Ascending aorta (tissue), 2 donors: ENCODE measurements at regions of chr5 and their contacts with region 1.

Region 1: GRCh38 chr5:15794052-15794985 is 294.3 kb downstream of the FBXL7 start:
- DNase-seq: no peak
- H3K4me3 ChIP-seq: no peak overlapping the region
- H3K27ac ChIP-seq: no peak overlapping the region
- H3K4me1 ChIP-seq: peaks cover 0 to 12% of the 10 kb centered on the region in 2 donors
- H3K27me3 ChIP-seq: no peaks in the 10 kb centered on the region
- CTCF ChIP-seq: peak in 2 of 3 experiments; percentile 22 to 27

Region 2: GRCh38 chr5:15105796-15106393 is 688.4 kb before region 1 on chr5:
- intact Hi-C with region 1: loop called (anchors 2 kb)
- DNase-seq: peak in 1 of 2 donors; percentile 75
- H3K4me3 ChIP-seq: no peak overlapping the region
- H3K27ac ChIP-seq: no peak overlapping the region
- H3K4me1 ChIP-seq: no peaks in the 10 kb centered on the region
- H3K27me3 ChIP-seq: no peaks in the 10 kb centered on the region
- CTCF ChIP-seq: peak; percentile 47 to 78 (median 64)

Region 3: DNA sequence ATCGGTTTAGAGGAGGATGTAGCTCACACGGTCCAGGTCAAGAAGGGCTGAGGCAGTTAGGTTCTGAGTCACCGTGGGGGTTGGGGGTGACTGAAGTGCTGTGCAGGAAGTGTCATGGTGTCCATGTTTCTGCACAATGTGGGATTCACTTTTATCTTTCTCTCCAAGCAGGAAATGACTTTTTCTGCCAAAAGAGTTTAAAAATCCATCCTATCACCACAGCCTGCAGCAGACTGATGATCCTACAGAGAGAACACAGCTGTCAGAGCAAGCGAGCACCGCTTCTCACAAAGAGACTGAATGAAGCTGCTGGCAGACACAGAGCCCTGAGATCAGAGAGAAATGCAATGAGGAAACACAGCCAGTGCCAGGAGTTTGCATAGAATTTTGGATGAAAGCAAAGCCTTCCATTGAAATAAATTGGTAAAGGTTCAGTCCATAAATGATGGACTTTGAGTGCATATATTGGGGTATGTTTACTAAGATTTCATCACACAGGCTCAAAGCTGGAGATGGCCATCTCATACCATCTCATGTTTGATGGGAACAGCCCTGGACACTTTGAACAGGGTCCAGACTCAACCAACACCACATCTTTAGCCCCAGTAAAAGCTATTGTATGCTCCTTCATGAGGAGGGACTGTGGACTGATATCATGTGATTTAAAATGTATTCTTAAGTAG is 508.3 kb before region 1 on chr5:
- intact Hi-C with region 1: loop called (anchors 5 kb)
- DNase-seq: no peak
- H3K4me3 ChIP-seq: no peak overlapping the region
- H3K27ac ChIP-seq: no peak overlapping the region
- H3K4me1 ChIP-seq: no peaks in the 10 kb centered on the region
- H3K27me3 ChIP-seq: no peaks in the 10 kb centered on the region
- CTCF ChIP-seq: no peak

Region 4: DNA sequence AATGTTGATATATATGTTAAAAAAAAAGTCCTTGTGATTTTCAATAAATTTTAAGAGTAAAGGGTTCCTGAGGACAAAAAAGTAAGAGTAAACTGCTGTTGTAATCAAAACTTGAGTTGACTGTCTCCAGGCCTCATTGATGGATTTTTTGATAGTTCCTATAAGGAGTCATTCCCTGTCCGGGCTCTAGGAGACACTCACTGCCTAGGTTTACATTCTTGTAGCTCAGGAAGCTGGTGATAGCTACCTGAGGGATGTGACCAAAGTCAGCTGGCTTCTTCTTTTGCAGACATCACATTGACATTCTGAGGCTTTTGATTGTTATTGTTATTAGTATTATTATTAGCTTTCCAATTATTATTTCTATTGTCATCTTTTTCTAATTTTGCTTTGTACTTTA is 410.9 kb before region 1 on chr5:
- intact Hi-C with region 1: loop called (anchors 10 kb)
- DNase-seq: no peak
- H3K4me3 ChIP-seq: no peak overlapping the region
- H3K27ac ChIP-seq: no peak overlapping the region
- H3K4me1 ChIP-seq: no peaks in the 10 kb centered on the region
- H3K27me3 ChIP-seq: no peaks in the 10 kb centered on the region
- CTCF ChIP-seq: peak in 2 of 3 experiments; percentile 32 to 34